GM13976 (cell line): ENCODE measurements at regions of chr18 and their contacts with region 1.

Region 1: DNA sequence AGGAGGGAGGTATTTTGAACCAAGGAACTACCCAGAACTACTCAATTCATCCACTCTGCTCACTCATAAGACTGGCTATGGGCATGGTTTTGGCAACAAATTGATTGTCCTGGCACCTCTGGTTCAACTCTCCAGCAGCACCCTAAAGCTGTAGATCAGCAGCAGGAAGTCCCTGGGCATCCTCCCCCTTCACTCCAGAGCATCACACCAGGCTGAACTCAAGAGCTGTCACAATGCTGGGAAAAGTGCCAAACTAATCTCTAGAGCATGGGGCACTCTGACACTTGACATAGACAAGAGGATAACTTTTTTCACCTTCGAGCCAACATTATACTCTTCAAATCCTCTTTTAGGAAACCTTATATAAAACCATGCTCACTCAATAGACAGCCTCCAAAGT is 154.1 kb upstream of the RBBP8 start:
- DNase-seq: no peak
- CTCF ChIP-seq: no peak

Region 2: DNA sequence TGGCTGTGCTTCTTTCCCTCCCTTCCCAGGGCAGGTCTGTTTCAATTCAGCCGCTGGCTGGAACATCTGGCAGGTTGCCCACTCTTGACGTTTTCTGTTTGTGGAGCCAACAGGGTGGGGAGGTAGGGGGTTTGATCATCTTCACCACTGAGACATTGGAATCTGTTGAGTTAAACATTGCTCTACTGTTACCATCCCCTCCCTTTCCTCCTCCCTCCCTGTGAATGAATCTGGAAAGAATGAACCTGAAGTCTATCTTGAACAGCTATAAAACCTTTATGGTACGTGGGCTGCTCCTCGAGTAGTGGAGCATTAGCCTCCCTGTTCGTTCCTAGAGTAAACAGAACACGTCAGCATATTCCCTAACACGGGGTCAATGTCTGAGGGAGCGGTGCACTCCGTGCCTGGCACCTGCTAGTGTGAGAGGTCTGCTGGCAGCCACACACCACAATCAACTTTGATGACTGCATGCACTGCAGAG is 95.8 kb before region 1 on chr18:
- in situ Hi-C with region 1: loop called (anchors 25 kb)
- DNase-seq: no peak
- CTCF ChIP-seq: no peak

Region 3: GRCh38 chr18:23071285-23071684 is 292.3 kb after region 1 on chr18:
- in situ Hi-C with region 1: no loop called
- DNase-seq: peak; percentile 79
- CTCF ChIP-seq: no peak

Region 4: GRCh38 chr18:24212939-24213338 is 1433.9 kb after region 1 on chr18:
- in situ Hi-C with region 1: loop called (anchors 25 kb)
- DNase-seq: no peak
- CTCF ChIP-seq: no peak